GM12878 (cell line): ENCODE measurements at regions of chr14 and their contacts with region 1.

Region 1: GRCh38 chr14:39158222-39158858 is 11.8 kb downstream of the TRAPPC6B start:
- DNase-seq: no peak
- ATAC-seq: no peak
- H3K4me3 ChIP-seq: no peak overlapping the region
- H3K27ac ChIP-seq: no peak overlapping the region
- H3K4me1 ChIP-seq: no peaks in the 10 kb centered on the region
- H3K27me3 ChIP-seq: no peaks in the 10 kb centered on the region
- CTCF ChIP-seq: no peak
- EP300 ChIP-seq: no peak
- POLR2A ChIP-seq: no peak
- RAD21 ChIP-seq: no peak

Region 2: GRCh38 chr14:39090548-39091111 is 67.7 kb before region 1 on chr14:
- CTCF ChIA-PET with region 1: no interaction called
- POLR2A ChIA-PET with region 1: no interaction called
- RAD21 ChIA-PET with region 1: no interaction called
- SMC1A ChIA-PET with region 1: no interaction called
- in situ Hi-C with region 1: no loop called
- intact Hi-C with region 1: no loop called
- DNase-seq: no peak
- ATAC-seq: no peak
- H3K4me3 ChIP-seq: no peak overlapping the region
- H3K27ac ChIP-seq: no peak overlapping the region
- H3K4me1 ChIP-seq: no peaks in the 10 kb centered on the region
- H3K27me3 ChIP-seq: no peaks in the 10 kb centered on the region
- CTCF ChIP-seq: no peak
- EP300 ChIP-seq: no peak
- POLR2A ChIP-seq: no peak
- RAD21 ChIP-seq: no peak

Region 3: DNA sequence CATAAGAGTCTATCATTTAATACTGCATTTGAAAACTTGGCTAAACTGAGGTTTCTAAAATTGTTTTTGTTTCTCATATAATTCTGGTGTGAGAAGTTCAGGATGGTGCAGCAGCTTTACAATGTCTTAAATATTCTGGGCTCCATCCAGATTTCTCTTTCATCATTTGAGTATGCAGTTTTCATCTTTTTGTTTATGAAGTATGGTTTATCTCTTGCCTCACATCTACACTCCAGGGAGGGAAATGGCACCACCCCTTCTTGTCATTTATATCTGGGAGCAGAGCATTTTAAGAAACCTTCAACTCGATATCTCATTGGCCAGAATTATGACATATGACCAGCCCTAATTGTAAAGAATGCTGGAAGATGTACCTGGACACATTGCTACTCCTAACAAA is 19.9 kb before region 1 on chr14:
- CTCF ChIA-PET with region 1: no interaction called
- POLR2A ChIA-PET with region 1: interaction called, 6 read pairs
- RAD21 ChIA-PET with region 1: interaction called, 3 read pairs
- SMC1A ChIA-PET with region 1: no interaction called
- in situ Hi-C with region 1: no loop called
- intact Hi-C with region 1: loop called (anchors 1 kb)
- DNase-seq: no peak
- ATAC-seq: no peak
- H3K4me3 ChIP-seq: no peak overlapping the region
- H3K27ac ChIP-seq: no peak overlapping the region
- H3K4me1 ChIP-seq: no peaks in the 10 kb centered on the region
- H3K27me3 ChIP-seq: no peaks in the 10 kb centered on the region
- CTCF ChIP-seq: no peak
- EP300 ChIP-seq: no peak
- POLR2A ChIP-seq: no peak
- RAD21 ChIP-seq: no peak

Region 4: GRCh38 chr14:39145266-39145966 is 12.9 kb before region 1 on chr14:
- CTCF ChIA-PET with region 1: no interaction called
- POLR2A ChIA-PET with region 1: interaction called, 3 read pairs
- RAD21 ChIA-PET with region 1: no interaction called
- SMC1A ChIA-PET with region 1: interaction called, 11 read pairs
- in situ Hi-C with region 1: no loop called
- intact Hi-C with region 1: no loop called
- DNase-seq: no peak
- ATAC-seq: no peak
- H3K4me3 ChIP-seq: no peak overlapping the region
- H3K27ac ChIP-seq: no peak overlapping the region
- H3K4me1 ChIP-seq: no peaks in the 10 kb centered on the region
- H3K27me3 ChIP-seq: no peaks in the 10 kb centered on the region
- CTCF ChIP-seq: no peak
- EP300 ChIP-seq: no peak
- POLR2A ChIP-seq: no peak
- RAD21 ChIP-seq: no peak

Region 5: DNA sequence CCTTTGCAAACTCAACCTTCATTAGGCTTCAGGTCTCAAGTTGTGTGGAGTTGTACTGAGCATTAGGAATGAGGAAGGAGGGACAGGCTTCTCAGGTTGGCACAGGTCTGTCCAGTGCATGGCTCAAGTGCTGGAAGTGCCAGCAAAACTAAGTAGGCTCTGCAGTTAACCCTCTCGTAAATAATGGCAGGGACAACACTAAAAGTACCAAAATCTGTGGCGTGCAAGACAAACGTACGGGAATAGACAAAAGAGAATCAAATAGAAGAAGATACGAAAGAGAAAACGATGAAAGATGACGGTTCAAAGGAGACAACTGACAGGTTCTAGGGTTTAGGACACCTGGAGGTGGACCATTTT is 11.2 kb after region 1 on chr14:
- CTCF ChIA-PET with region 1: interaction called, 3 read pairs
- POLR2A ChIA-PET with region 1: interaction called, 6 read pairs
- RAD21 ChIA-PET with region 1: interaction called, 3 read pairs
- SMC1A ChIA-PET with region 1: interaction called, 13 read pairs
- in situ Hi-C with region 1: no loop called
- intact Hi-C with region 1: no loop called
- DNase-seq: no peak
- ATAC-seq: peak; percentile 22
- H3K4me3 ChIP-seq: peak overlapping the region; percentile 97
- H3K27ac ChIP-seq: peak overlapping the region; percentile 98
- H3K4me1 ChIP-seq: peaks cover 7% of the 10 kb centered on the region
- H3K27me3 ChIP-seq: no peaks in the 10 kb centered on the region
- CTCF ChIP-seq: no peak
- EP300 ChIP-seq: no peak
- POLR2A ChIP-seq: no peak
- RAD21 ChIP-seq: no peak